ENCODE measurements at regions of chr9 and their contacts with region 1.

Region 1: GRCh38 chr9:112361601-112362000 is 18.3 kb upstream of the HSDL2 start:
- DNase-seq: peak; percentile 70
- ATAC-seq: peak; percentile 45
- H3K4me3 ChIP-seq: no peak overlapping the region
- H3K4me3 Mint-ChIP-seq: peak overlapping the region; percentile 66
- H3K27ac ChIP-seq: no peak overlapping the region
- H3K27ac Mint-ChIP-seq: no peak overlapping the region
- H3K4me1 ChIP-seq: peaks cover 0 to 5% of the 10 kb centered on the region in 2 donors
- H3K4me1 Mint-ChIP-seq: peaks cover 3% of the 10 kb centered on the region
- H3K27me3 ChIP-seq: no peaks in the 10 kb centered on the region
- H3K27me3 Mint-ChIP-seq: no peaks in the 10 kb centered on the region
- CTCF ChIP-seq: peak; percentile 75

Region 2: DNA sequence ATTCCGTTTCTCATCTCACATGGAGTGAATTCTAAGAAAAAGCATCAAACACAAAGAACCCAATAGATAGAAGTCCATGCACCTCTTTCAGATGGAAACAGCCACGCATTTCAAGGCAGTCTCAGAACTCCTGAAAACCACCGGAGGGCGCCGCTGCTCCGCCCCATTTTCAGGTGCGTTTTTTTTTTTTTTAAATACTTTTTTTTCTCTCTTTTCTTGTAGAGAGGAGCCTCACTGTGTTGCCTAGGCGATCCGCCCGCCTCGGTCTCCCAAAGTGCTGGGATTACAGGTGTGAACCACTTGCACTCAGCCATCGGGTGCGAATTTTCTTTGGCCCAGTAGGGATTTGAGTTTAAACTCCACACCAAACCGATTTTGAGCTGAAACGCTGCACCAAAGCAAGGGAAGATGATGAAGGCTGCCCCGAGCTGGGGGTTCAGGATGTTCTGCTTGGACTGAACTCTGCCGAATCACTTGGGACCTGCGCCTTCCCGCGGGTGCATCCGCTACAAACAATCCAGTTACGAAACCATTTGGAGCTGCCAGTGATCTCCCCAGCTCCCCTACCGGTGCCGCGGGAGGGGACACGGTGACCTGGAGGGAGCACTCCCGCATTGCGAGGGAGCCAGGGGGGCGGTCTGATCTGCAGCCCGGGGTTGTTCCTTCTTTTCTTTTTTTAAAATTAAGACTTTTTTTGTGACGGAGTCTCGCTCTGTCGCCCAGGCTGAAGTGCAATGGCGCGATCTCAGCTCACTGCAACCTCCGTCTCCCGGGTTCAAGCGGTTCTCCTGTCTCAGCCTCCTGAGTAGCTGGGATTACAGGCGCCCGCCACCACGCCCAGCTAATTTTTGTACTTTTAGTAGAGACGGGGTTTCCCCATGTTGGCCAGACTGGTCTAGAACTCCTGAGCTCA is 763.5 kb before region 1 on chr9:
- CTCF ChIA-PET with region 1: interaction called, 3 read pairs
- POLR2A ChIA-PET with region 1: no interaction called
- intact Hi-C with region 1: loop called (anchors 2 kb)
- DNase-seq: peak; percentile 75
- ATAC-seq: peak; percentile 69
- H3K4me3 ChIP-seq: peak overlapping the region; percentile 39 to 76 (median 59)
- H3K4me3 Mint-ChIP-seq: peak overlapping the region; percentile 87
- H3K27ac ChIP-seq: no peak overlapping the region
- H3K27ac Mint-ChIP-seq: peak overlapping the region; percentile 59
- H3K4me1 ChIP-seq: peaks cover 22 to 23% of the 10 kb centered on the region in 2 donors
- H3K4me1 Mint-ChIP-seq: peaks cover 25% of the 10 kb centered on the region
- H3K27me3 ChIP-seq: peaks cover 0 to 39% (median 20%) of the 10 kb centered on the region in 4 experiments
- H3K27me3 Mint-ChIP-seq: peaks cover 42% of the 10 kb centered on the region
- CTCF ChIP-seq: peak; percentile 76

Region 3: GRCh38 chr9:111828193-111828592 is 533.4 kb before region 1 on chr9:
- CTCF ChIA-PET with region 1: no interaction called
- POLR2A ChIA-PET with region 1: no interaction called
- intact Hi-C with region 1: loop called (anchors 5 kb)
- DNase-seq: peak; percentile 48
- ATAC-seq: peak; percentile 39
- H3K4me3 ChIP-seq: no peak overlapping the region
- H3K4me3 Mint-ChIP-seq: no peak overlapping the region
- H3K27ac ChIP-seq: no peak overlapping the region
- H3K27ac Mint-ChIP-seq: no peak overlapping the region
- H3K4me1 ChIP-seq: peaks cover 3 to 4% of the 10 kb centered on the region in 2 donors
- H3K4me1 Mint-ChIP-seq: peaks cover 9% of the 10 kb centered on the region
- H3K27me3 ChIP-seq: no peaks in the 10 kb centered on the region
- H3K27me3 Mint-ChIP-seq: no peaks in the 10 kb centered on the region
- CTCF ChIP-seq: peak; percentile 9

Region 4: GRCh38 chr9:112091810-112092209 is 269.8 kb before region 1 on chr9:
- CTCF ChIA-PET with region 1: interaction called, 143 read pairs
- POLR2A ChIA-PET with region 1: no interaction called
- intact Hi-C with region 1: no loop called
- DNase-seq: no peak
- ATAC-seq: no peak
- H3K4me3 ChIP-seq: no peak overlapping the region
- H3K4me3 Mint-ChIP-seq: no peak overlapping the region
- H3K27ac ChIP-seq: no peak overlapping the region
- H3K27ac Mint-ChIP-seq: no peak overlapping the region
- H3K4me1 ChIP-seq: no peaks in the 10 kb centered on the region
- H3K4me1 Mint-ChIP-seq: peaks cover 12% of the 10 kb centered on the region
- H3K27me3 ChIP-seq: no peaks in the 10 kb centered on the region
- H3K27me3 Mint-ChIP-seq: no peaks in the 10 kb centered on the region
- CTCF ChIP-seq: no peak

Region 5: GRCh38 chr9:112112941-112113681 is 248.5 kb before region 1 on chr9:
- CTCF ChIA-PET with region 1: interaction called, 28 read pairs
- POLR2A ChIA-PET with region 1: no interaction called
- intact Hi-C with region 1: no loop called
- DNase-seq: no peak
- ATAC-seq: no peak
- H3K4me3 ChIP-seq: no peak overlapping the region
- H3K4me3 Mint-ChIP-seq: no peak overlapping the region
- H3K27ac ChIP-seq: no peak overlapping the region
- H3K27ac Mint-ChIP-seq: no peak overlapping the region
- H3K4me1 ChIP-seq: peaks cover 26% of the 10 kb centered on the region in 2 donors
- H3K4me1 Mint-ChIP-seq: peaks cover 45% of the 10 kb centered on the region
- H3K27me3 ChIP-seq: no peaks in the 10 kb centered on the region
- H3K27me3 Mint-ChIP-seq: no peaks in the 10 kb centered on the region
- CTCF ChIP-seq: no peak

Region 6: DNA sequence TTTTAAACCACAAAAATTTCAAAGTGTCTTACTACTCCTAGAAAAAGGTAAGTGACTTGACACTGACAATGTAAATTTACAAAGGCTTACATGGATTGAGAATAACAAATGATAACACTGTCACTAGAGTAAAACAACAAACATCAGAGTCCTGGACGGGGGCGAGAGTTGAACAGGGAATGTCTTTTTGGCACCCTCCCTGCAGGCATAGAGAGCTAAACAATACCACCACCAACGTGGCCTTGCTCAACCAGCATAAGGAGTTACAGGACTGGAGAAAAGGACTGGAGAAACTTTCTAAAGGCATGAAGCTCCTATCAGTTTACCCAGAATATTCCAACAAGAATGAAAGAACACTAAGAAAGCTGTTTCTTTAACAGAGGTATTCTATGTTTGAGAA is 83.4 kb before region 1 on chr9:
- CTCF ChIA-PET with region 1: no interaction called
- POLR2A ChIA-PET with region 1: no interaction called
- intact Hi-C with region 1: no loop called
- DNase-seq: no peak
- ATAC-seq: no peak
- H3K4me3 ChIP-seq: no peak overlapping the region
- H3K4me3 Mint-ChIP-seq: no peak overlapping the region
- H3K27ac ChIP-seq: no peak overlapping the region
- H3K27ac Mint-ChIP-seq: no peak overlapping the region
- H3K4me1 ChIP-seq: peaks cover 0 to 4% of the 10 kb centered on the region in 2 donors
- H3K4me1 Mint-ChIP-seq: peaks cover 48% of the 10 kb centered on the region
- H3K27me3 ChIP-seq: no peaks in the 10 kb centered on the region
- H3K27me3 Mint-ChIP-seq: no peaks in the 10 kb centered on the region
- CTCF ChIP-seq: no peak

Region 7: GRCh38 chr9:112379177-112380101 is 17.8 kb after region 1 on chr9:
- CTCF ChIA-PET with region 1: interaction called, 19 read pairs
- POLR2A ChIA-PET with region 1: no interaction called
- intact Hi-C with region 1: loop called (anchors 1 kb)
- DNase-seq: peak; percentile 96
- ATAC-seq: peak; percentile 93
- H3K4me3 ChIP-seq: peak overlapping the region; percentile 82 to 98 (median 89)
- H3K4me3 Mint-ChIP-seq: peak overlapping the region; percentile 95
- H3K27ac ChIP-seq: peak overlapping the region; percentile 78 to 88
- H3K27ac Mint-ChIP-seq: peak overlapping the region; percentile 92
- H3K4me1 ChIP-seq: peaks cover 27 to 30% of the 10 kb centered on the region in 2 donors
- H3K4me1 Mint-ChIP-seq: peaks cover 59% of the 10 kb centered on the region
- H3K27me3 ChIP-seq: no peaks in the 10 kb centered on the region
- H3K27me3 Mint-ChIP-seq: no peaks in the 10 kb centered on the region
- CTCF ChIP-seq: no peak

Measured in B cell (primary cell).